CD4-positive, alpha-beta T cell (primary cell): ENCODE measurements at regions of chr6 and their contacts with region 1.

Region 1: GRCh38 chr6:32971581-32972352 is 3.4 kb downstream of the BRD2 start:
- DNase-seq: peak; percentile 99 to 100 (median 100)
- ATAC-seq: peak; percentile 53
- H3K4me3 ChIP-seq: peak overlapping the region; percentile 97
- H3K4me3 Mint-ChIP-seq: peak overlapping the region; percentile 98
- H3K27ac ChIP-seq: peak overlapping the region; percentile 91 to 98
- H3K27ac Mint-ChIP-seq: peak overlapping the region; percentile 100
- H3K4me1 ChIP-seq: peaks cover 52% of the 10 kb centered on the region
- H3K4me1 Mint-ChIP-seq: peaks cover 48% of the 10 kb centered on the region
- H3K27me3 ChIP-seq: no peaks in the 10 kb centered on the region
- H3K27me3 Mint-ChIP-seq: no peaks in the 10 kb centered on the region
- CTCF ChIP-seq: no peak

Region 2: DNA sequence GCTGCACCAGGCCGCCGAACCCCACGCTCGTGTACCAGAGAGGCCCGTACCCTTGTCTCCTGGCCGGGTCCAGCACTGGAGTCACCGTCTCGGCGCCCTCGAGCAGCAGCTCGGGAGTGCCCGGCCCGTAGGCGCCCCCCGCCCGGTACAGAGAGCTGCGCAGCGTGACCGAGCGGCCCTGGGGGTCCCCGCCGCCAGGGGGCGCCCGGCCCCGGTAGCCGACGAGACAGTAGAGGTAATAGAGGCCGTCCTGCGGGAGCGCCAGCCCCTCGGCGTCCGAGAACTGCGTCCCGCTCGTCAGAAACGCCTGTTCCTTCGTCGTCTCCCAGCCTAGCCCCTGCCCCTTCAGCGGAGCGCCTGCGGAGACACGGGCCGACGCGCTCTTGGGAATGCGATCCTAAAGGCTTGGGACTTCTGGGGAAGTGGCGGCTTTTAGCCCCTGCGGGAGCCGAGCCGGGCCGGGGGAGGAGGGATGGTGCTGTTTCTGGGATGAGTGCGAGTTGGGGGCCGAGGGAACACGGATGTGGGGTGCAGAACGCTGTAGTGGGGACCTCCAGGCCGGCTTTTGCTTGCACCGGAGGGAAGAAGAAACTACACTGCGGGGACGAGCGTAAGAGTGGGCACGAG is 1390.8 kb before region 1 on chr6:
- CTCF ChIA-PET with region 1: no interaction called
- POLR2A ChIA-PET with region 1: interaction called, 10 read pairs
- intact Hi-C with region 1: no loop called
- DNase-seq: peak; percentile 77 to 93 (median 90)
- ATAC-seq: peak; percentile 66
- H3K4me3 ChIP-seq: peak overlapping the region; percentile 97
- H3K4me3 Mint-ChIP-seq: peak overlapping the region; percentile 97
- H3K27ac ChIP-seq: peak overlapping the region; percentile 82 to 95
- H3K27ac Mint-ChIP-seq: peak overlapping the region; percentile 85
- H3K4me1 ChIP-seq: peaks cover 82% of the 10 kb centered on the region
- H3K4me1 Mint-ChIP-seq: peaks cover 84% of the 10 kb centered on the region
- H3K27me3 ChIP-seq: no peaks in the 10 kb centered on the region
- H3K27me3 Mint-ChIP-seq: no peaks in the 10 kb centered on the region
- CTCF ChIP-seq: peak; percentile 98

Region 3: GRCh38 chr6:32838114-32838958 is 133.4 kb before region 1 on chr6 and contains the start of gene TAP2:
- CTCF ChIA-PET with region 1: interaction called, 19 read pairs
- POLR2A ChIA-PET with region 1: interaction called, 444 read pairs
- intact Hi-C with region 1: loop called in 1 of 2 experiments (anchors 2 kb)
- DNase-seq: peak; percentile 93 to 99 (median 98)
- ATAC-seq: peak; percentile 86
- H3K4me3 ChIP-seq: peak within 1 kb of the TSS; percentile 77
- H3K4me3 Mint-ChIP-seq: peak within 1 kb of the TSS; percentile 97
- H3K27ac ChIP-seq: peak within 1 kb of the TSS; percentile 76 to 87
- H3K27ac Mint-ChIP-seq: peak within 1 kb of the TSS; percentile 99
- H3K4me1 ChIP-seq: peaks cover 67% of the 10 kb centered on the region
- H3K4me1 Mint-ChIP-seq: peaks cover 94% of the 10 kb centered on the region
- H3K27me3 ChIP-seq: no peaks in the 10 kb centered on the region
- H3K27me3 Mint-ChIP-seq: no peaks in the 10 kb centered on the region
- CTCF ChIP-seq: peak; percentile 93
- total RNA-seq, gene TAP2: 165 to 171 TPM

Region 4: DNA sequence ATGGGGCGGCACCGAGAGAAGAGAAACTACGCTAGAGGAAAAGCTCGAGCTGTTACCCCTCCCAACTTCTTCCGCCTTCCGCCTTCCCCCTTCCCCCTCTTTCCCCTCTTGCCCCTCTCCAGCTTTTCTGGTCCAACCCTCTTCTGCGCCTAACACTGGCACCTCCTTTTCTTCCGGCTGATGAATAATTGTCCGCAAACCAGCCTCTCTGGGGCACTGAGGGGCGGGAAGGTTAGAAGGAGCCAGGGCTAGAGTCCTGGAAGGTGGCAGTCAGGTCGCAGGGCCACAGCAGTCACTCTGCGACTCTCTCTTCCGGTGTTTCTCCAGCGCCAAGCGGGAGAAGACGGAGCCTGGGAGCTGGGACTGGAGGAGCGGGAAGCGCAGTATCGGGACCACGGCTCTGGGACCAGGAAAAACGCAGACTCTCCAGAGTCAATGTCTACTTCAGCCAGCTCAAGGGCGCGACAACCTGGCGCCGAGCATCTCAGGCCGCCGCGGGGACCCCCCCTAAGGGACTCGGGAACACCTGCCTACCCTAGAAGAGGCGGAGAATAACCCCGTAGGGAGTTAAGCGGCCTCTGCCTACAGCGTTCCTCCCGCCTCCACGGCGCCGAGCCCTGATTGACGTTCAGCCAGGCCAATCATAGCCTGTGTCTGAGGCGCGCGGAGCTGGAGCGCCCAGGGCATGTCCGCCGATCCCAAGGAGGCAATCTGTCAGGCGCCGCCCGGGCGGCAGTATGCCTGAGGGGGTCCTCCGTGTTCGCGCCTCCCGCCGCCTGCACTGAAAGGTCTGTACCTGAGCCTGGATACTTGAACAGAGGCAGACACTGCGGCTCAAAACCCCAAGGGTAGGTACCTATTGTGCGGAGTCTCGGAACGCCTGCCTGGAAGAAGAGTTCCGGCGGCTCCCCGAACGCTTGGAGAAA is 77.4 kb before region 1 on chr6:
- CTCF ChIA-PET with region 1: interaction called, 5 read pairs
- POLR2A ChIA-PET with region 1: interaction called, 129 read pairs
- intact Hi-C with region 1: loop called (anchors 2 kb)
- DNase-seq: peak; percentile 88 to 97 (median 94)
- ATAC-seq: peak; percentile 98
- H3K4me3 ChIP-seq: peak overlapping the region; percentile 89
- H3K4me3 Mint-ChIP-seq: peak overlapping the region; percentile 100
- H3K27ac ChIP-seq: peak overlapping the region; percentile 75 to 85
- H3K27ac Mint-ChIP-seq: peak overlapping the region; percentile 91
- H3K4me1 ChIP-seq: peaks cover 22% of the 10 kb centered on the region
- H3K4me1 Mint-ChIP-seq: peaks cover 45% of the 10 kb centered on the region
- H3K27me3 ChIP-seq: no peaks in the 10 kb centered on the region
- H3K27me3 Mint-ChIP-seq: no peaks in the 10 kb centered on the region
- CTCF ChIP-seq: no peak

Region 5: DNA sequence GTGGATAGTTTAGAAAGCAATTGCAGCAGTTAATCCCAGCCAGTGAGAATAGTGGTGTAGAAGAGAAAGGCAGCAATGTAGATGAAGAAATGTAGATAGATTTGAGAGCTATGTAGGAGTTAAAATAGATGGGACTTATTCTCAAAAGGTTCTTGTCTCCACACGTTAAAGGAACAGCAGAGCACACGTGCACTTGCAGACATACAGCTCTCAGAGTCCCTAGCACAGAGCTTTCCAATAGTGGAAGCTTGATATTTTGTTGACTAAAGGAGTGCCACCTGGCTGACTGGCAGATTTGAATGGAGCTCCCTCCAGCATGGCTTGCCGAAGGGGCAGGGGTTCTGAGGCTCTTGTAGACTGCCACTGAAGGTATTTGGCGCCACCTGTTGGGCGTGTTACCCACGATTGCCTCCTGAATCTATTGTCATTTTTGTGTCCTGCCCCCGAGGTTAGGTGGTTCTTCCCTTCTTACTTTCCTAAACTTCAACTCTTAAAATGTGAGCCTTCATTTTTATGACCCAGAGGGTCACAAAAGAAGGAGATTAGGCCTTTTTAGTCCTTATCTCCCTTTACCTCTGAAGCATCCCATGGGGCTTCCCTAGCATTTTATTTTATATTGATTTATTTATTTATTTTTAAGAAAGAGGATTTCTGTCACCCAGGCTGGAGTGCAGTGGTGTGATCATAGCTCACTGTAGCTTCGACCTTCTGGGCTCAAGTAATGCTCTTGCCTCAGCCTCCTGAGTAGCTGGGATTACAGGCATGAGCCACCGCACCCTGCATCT is 13.0 kb after region 1 on chr6:
- CTCF ChIA-PET with region 1: interaction called, 108 read pairs
- POLR2A ChIA-PET with region 1: interaction called, 347 read pairs
- intact Hi-C with region 1: loop called in 1 of 2 experiments (anchors 2 kb)
- DNase-seq: peak; percentile 83 to 97 (median 89)
- ATAC-seq: peak; percentile 98
- H3K4me3 ChIP-seq: no peak overlapping the region
- H3K4me3 Mint-ChIP-seq: no peak overlapping the region
- H3K27ac ChIP-seq: no peak overlapping the region
- H3K27ac Mint-ChIP-seq: peak overlapping the region; percentile 43
- H3K4me1 ChIP-seq: peaks cover 18% of the 10 kb centered on the region
- H3K4me1 Mint-ChIP-seq: peaks cover 28% of the 10 kb centered on the region
- H3K27me3 ChIP-seq: no peaks in the 10 kb centered on the region
- H3K27me3 Mint-ChIP-seq: no peaks in the 10 kb centered on the region
- CTCF ChIP-seq: peak; percentile 83

Region 6: DNA sequence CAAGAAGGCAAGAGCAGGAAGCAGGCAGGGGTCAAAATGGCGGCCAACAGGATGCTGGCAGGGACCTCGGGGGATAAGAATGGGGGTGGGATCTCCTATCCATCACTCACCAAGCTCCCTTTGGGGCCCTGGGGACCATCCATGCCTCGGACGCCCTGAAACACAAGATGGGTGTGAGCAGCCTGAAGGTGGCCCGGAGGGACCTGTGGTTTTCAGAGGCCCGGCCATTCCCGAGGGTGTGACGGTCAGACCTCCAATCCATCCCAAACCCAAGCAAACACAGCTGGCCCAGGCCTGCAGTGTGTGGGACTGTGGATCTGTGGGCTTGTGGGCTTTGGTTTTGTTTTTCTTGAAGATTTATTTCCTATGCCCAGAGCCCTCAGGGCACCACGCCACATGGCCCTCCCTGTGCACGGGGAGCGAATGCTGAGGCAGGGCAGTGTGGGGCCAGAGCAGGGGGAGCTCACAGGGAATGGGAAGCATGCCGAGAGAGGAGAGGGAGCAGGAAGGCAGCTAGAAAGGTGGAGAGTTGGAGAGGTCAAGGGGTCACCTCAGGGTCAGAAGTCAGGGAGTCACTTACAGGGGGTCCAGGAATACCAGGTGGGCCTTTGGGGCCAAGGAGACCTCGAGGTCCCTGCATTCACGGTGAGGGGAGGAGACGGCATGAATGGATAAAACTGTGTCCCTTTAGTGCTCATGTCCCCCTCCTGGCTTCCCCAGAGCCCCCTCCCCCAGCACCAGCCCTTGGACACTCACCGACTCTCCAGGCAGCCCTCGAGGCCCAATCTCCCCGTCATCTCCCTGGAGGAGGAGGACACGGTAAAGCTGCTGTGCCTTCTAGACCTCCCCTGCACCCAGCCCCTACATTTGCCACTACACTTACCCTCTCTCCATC is 206.0 kb after region 1 on chr6:
- CTCF ChIA-PET with region 1: no interaction called
- POLR2A ChIA-PET with region 1: no interaction called
- intact Hi-C with region 1: no loop called
- DNase-seq: no peak
- ATAC-seq: no peak
- H3K4me3 ChIP-seq: no peak overlapping the region
- H3K4me3 Mint-ChIP-seq: no peak overlapping the region
- H3K27ac ChIP-seq: no peak overlapping the region
- H3K27ac Mint-ChIP-seq: no peak overlapping the region
- H3K4me1 ChIP-seq: peaks cover 3% of the 10 kb centered on the region
- H3K4me1 Mint-ChIP-seq: peaks cover 3% of the 10 kb centered on the region
- H3K27me3 ChIP-seq: peaks cover 0 to 1% of the 10 kb centered on the region in 2 experiments
- H3K27me3 Mint-ChIP-seq: peaks cover 11% of the 10 kb centered on the region
- CTCF ChIP-seq: no peak

Region 7: GRCh38 chr6:33271458-33272274 is 299.9 kb after region 1 on chr6 and contains the starts of genes RPS18 and VPS52:
- CTCF ChIA-PET with region 1: no interaction called
- POLR2A ChIA-PET with region 1: interaction called, 27 read pairs
- intact Hi-C with region 1: no loop called
- DNase-seq: peak; percentile 83 to 98 (median 89)
- ATAC-seq: peak; percentile 80
- H3K4me3 ChIP-seq: peak within 1 kb of the TSS; percentile 93
- H3K4me3 Mint-ChIP-seq: peak within 1 kb of the TSS; percentile 96
- H3K27ac ChIP-seq: peak within 1 kb of the TSS; percentile 92
- H3K27ac Mint-ChIP-seq: peak within 1 kb of the TSS; percentile 97
- H3K4me1 ChIP-seq: peaks cover 62% of the 10 kb centered on the region
- H3K4me1 Mint-ChIP-seq: peaks cover 70% of the 10 kb centered on the region
- H3K27me3 ChIP-seq: no peaks in the 10 kb centered on the region
- H3K27me3 Mint-ChIP-seq: no peaks in the 10 kb centered on the region
- CTCF ChIP-seq: no peak
- total RNA-seq, gene RPS18: 5,159 to 5,309 TPM
- total RNA-seq, gene VPS52: 67.9 TPM

Region 8: DNA sequence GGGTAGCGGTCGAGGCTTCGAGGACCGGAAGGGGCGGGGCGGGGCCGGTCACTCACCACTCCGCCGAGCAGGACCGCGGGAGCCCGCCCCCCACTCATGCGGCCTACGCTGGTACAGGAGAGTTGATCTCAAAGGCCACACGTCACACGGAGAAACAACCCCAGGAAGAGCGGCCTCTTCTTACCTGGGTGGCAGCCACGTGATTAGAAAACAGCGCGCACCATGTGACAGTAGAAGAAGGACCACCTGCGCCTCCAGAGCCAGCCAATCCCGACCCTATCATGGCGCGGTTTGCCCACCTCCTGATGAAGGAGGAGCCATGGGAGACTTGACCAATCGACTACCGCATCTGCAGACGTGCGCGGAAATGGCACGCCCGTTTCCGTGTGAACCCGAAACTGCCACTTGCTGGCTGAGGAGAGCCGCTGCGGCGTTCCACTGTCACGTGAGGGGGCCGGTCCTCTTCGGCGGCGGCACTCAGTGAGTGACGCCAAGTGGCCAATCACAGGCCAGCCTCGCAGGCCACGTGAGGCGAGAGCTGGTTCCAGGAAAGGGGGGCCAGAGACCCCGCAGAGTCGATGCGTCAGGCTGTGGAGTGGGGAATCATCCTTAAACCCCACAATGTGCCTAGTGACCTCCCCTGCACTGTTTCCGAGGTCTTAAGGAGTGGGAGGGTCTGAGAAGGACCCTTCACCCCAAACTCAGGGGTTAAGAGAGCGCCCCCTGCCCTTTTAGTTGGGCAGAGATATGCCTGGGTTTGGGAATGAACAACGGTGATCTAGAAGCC is 446.3 kb after region 1 on chr6 and contains the start of gene CUTA:
- CTCF ChIA-PET with region 1: no interaction called
- POLR2A ChIA-PET with region 1: interaction called, 11 read pairs
- intact Hi-C with region 1: no loop called
- DNase-seq: peak; percentile 97 to 100 (median 98)
- ATAC-seq: peak; percentile 85
- H3K4me3 ChIP-seq: peak within 1 kb of the TSS; percentile 82
- H3K4me3 Mint-ChIP-seq: peak within 1 kb of the TSS; percentile 92
- H3K27ac ChIP-seq: peak within 1 kb of the TSS; percentile 97 to 99
- H3K27ac Mint-ChIP-seq: peak within 1 kb of the TSS; percentile 98
- H3K4me1 ChIP-seq: peaks cover 77% of the 10 kb centered on the region
- H3K4me1 Mint-ChIP-seq: peaks cover 79% of the 10 kb centered on the region
- H3K27me3 ChIP-seq: no peaks in the 10 kb centered on the region
- H3K27me3 Mint-ChIP-seq: no peaks in the 10 kb centered on the region
- CTCF ChIP-seq: peak; percentile 30
- total RNA-seq, gene CUTA: 176 to 185 TPM